WTC11 (cell line): ENCODE measurements at regions of chr1 and their contacts with region 1.

Region 1: DNA sequence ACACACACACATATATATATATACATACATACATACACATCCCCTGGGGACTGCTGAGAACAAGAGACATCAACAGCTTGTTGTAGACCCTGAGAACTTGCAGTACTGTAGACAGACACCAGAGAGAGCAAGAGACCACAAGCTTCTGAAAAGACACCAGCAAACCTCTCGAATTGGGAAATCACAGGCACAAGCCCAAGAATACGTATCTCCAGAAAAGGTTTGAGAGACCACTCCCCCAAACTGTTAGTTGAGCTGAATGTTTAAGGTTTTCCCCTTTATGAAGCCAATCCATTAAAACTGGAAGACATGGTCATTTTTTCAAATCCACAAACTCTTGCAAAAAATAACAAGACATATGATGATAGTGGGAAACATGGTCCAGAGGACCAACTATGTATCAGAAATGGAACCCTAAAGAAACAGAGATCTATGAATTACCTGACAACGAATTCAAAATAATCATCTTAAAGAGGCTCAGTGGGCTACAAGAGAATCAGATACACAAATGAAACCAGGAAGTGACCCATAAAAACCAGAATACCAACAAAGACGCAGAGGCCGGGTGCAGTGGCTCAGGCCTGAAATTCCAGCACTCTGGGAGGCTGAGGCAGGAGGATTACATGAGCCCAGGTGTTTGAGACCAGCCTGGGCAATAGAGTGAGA is 45.1 kb downstream of the SLC2A1 start:
- DNase-seq: peak; percentile 53
- ATAC-seq: peak; percentile 94
- H3K4me3 Mint-ChIP-seq: no peak overlapping the region
- H3K27ac Mint-ChIP-seq: no peak overlapping the region
- H3K4me1 Mint-ChIP-seq: no peaks in the 10 kb centered on the region; the same call in 1 of the 2 replicates
- H3K27me3 Mint-ChIP-seq: peaks cover 7% of the 10 kb centered on the region
- CTCF ChIP-seq: peak; percentile 72

Region 2: GRCh38 chr1:42833981-42834380 is 79.6 kb before region 1 on chr1:
- CTCF ChIA-PET with region 1: interaction called, 11 read pairs
- POLR2A ChIA-PET with region 1: no interaction called
- DNase-seq: no peak
- ATAC-seq: no peak
- H3K4me3 Mint-ChIP-seq: no peak overlapping the region
- H3K27ac Mint-ChIP-seq: no peak overlapping the region
- H3K4me1 Mint-ChIP-seq: peaks cover 3% of the 10 kb centered on the region; the same call in 1 of the 2 replicates
- H3K27me3 Mint-ChIP-seq: no peaks in the 10 kb centered on the region
- CTCF ChIP-seq: no peak

Region 3: GRCh38 chr1:42924082-42924850 is 10.7 kb after region 1 on chr1:
- CTCF ChIA-PET with region 1: interaction called, 45 read pairs
- POLR2A ChIA-PET with region 1: no interaction called
- DNase-seq: peak; percentile 97
- ATAC-seq: peak; percentile 84
- H3K4me3 Mint-ChIP-seq: peak overlapping the region; percentile 81
- H3K27ac Mint-ChIP-seq: peak overlapping the region; percentile 95
- H3K4me1 Mint-ChIP-seq: peaks cover 52% of the 10 kb centered on the region
- H3K27me3 Mint-ChIP-seq: no peaks in the 10 kb centered on the region
- CTCF ChIP-seq: no peak